ENCODE measurements at regions of chr5 and their contacts with region 1.

Region 1: DNA sequence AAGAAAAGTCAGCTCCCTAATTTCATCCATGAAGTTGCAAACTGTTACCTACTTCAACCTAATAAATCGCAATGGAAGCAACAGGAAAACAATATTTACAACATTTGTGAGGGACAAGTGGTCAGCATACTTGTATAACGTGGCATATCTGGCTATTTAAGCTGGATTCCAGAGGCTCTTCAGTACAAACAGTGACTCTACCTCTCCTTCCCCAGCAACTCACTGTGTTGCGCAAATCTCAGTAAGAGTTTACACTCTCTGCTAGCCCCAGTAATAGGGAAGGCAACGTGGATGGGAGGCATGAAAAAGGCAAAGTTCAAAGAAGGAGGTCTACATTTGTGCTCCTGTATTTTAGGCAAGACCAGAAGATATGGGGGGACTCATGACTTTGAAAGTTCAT is 18.9 kb upstream of the SEMA5A start:
- DNase-seq: no peak
- H3K4me3 ChIP-seq: no peak overlapping the region
- H3K4me3 Mint-ChIP-seq: no peak overlapping the region
- H3K27ac Mint-ChIP-seq: no peak overlapping the region
- H3K4me1 ChIP-seq: peaks cover 13% of the 10 kb centered on the region
- H3K4me1 Mint-ChIP-seq: peaks cover 4% of the 10 kb centered on the region
- H3K27me3 ChIP-seq: no peaks in the 10 kb centered on the region
- H3K27me3 Mint-ChIP-seq: no peaks in the 10 kb centered on the region
- CTCF ChIP-seq: no peak

Region 2: DNA sequence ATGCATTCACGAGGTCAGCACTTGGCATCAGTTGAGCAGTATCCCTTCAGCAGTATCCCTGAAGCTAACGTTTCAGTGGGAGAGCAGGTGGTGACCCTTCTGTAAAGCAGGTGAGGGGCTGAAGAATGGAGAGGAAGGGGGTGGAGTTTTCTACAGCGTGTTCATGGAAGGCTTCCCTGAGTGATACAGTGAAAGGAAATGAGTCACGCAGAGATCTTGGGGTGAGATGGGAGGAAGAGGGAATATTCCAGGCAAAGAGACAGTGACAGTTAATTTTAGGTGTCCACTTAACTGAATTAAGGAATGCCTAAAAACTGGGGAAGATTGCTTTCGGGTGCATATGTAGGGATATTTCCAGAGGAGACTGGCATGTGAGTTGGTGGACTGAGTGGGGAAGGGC is 39.7 kb after region 1 on chr5:
- CTCF ChIA-PET with region 1: no interaction called
- POLR2A ChIA-PET with region 1: no interaction called
- intact Hi-C with region 1: loop called (anchors 1 kb)
- DNase-seq: no peak
- H3K4me3 ChIP-seq: no peak overlapping the region
- H3K4me3 Mint-ChIP-seq: no peak overlapping the region
- H3K27ac Mint-ChIP-seq: no peak overlapping the region
- H3K4me1 ChIP-seq: no peaks in the 10 kb centered on the region
- H3K4me1 Mint-ChIP-seq: peaks cover 7% of the 10 kb centered on the region
- H3K27me3 ChIP-seq: no peaks in the 10 kb centered on the region
- H3K27me3 Mint-ChIP-seq: no peaks in the 10 kb centered on the region
- CTCF ChIP-seq: no peak